ENCODE measurements at regions of chr2 and their contacts with region 1.

Region 1: GRCh38 chr2:169824373-169825333 is at the start of gene METTL5:
- DNase-seq: peak; percentile 86
- ATAC-seq: peak; percentile 50
- H3K4me3 ChIP-seq: peak within 1 kb of the TSS; percentile 78
- H3K27ac ChIP-seq: peak within 1 kb of the TSS; percentile 54
- H3K4me1 ChIP-seq: peaks cover 43% of the 10 kb centered on the region
- H3K27me3 ChIP-seq: no peaks in the 10 kb centered on the region
- CTCF ChIP-seq: peak; percentile 98
- total RNA-seq, gene METTL5: 61.1 and 62.0 TPM in 2 replicates

Region 2: DNA sequence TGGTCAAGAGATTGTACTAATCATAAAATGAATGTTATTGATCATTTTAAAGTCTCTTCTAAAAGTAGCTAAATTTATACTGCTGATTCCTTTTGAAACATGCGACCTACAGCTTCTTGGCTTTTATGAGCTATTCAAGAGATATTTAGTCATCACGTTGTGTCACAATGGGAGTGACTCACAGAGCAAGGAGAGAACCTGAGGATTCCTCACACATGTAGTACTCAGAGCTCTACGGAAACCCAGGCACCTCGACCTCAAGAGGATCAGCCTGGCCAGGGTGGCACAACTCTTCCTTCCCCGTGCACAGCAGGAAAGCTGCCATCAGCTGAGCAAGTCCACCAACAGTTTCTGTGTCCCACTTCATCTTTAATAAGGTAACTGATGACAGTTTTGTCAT is 755.3 kb before region 1 on chr2 and contains the start of gene DHRS9:
- CTCF ChIA-PET with region 1: no interaction called
- POLR2A ChIA-PET with region 1: no interaction called
- intact Hi-C with region 1: no loop called
- DNase-seq: peak; percentile 97
- ATAC-seq: peak; percentile 97
- H3K4me3 ChIP-seq: no peak within 1 kb of the TSS
- H3K27ac ChIP-seq: peak within 1 kb of the TSS; percentile 65
- H3K4me1 ChIP-seq: peaks cover 44% of the 10 kb centered on the region
- H3K27me3 ChIP-seq: no peaks in the 10 kb centered on the region
- CTCF ChIP-seq: no peak
- total RNA-seq, gene DHRS9: 0.22 TPM in 1 of 2 replicates, not detected in the other

Region 3: DNA sequence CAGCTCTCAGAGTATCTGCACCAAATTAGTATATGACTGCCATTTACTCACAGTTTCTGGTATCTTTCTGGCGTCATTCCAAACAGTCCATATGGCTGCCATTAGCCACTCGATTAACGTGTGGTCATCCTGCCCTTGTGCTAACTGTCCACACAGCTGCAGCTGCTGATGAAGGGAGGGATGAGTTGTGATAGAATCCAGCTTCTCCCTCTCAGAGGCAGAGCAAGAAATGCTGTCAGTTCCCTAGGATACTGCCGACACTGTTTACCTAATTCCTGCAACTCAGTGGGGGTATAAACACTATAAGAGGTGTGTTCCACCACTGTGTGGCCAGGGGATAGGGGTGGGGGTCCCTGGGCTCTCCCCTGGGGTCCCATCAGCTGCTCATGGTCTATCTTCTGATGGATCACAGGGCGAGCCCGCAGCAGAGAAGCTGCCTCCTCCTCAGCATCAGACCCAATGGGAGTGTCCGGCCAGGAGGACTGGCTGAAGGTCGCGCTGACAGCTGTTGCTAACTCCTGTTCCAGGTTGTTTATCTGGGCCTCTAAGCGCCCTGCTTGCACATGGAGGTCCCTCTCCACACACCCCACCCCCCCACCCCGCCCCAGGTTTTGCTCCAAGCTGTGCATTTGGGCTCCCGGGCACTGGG is 108.3 kb before region 1 on chr2:
- CTCF ChIA-PET with region 1: no interaction called
- POLR2A ChIA-PET with region 1: no interaction called
- intact Hi-C with region 1: no loop called
- DNase-seq: no peak
- ATAC-seq: peak; percentile 28
- H3K4me3 ChIP-seq: no peak overlapping the region; the same call in 1 of the 2 replicates
- H3K27ac ChIP-seq: no peak overlapping the region
- H3K4me1 ChIP-seq: peaks cover 26% of the 10 kb centered on the region
- H3K27me3 ChIP-seq: no peaks in the 10 kb centered on the region
- CTCF ChIP-seq: no peak

Region 4: DNA sequence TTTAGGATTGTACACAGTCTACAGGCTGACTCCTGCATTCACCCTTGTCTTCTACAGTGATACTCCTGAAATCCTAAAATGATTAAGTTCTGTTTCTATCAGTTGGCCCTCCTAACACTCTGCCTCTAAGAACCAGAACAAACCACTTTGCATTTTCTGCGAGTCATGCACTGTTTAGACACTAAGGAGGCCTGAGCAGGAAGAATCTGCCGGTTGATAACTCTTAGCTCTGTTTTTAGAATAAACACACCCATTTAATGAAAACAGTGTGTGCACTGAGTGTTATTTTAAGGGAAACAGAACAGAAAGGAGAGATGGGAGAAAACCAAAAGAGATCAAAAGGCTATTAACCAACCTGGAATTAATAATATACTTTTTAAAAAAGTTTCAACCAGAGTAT is 48.9 kb before region 1 on chr2:
- CTCF ChIA-PET with region 1: no interaction called
- POLR2A ChIA-PET with region 1: interaction called, 10 read pairs
- intact Hi-C with region 1: no loop called
- DNase-seq: peak; percentile 15
- ATAC-seq: no peak
- H3K4me3 ChIP-seq: no peak overlapping the region
- H3K27ac ChIP-seq: no peak overlapping the region
- H3K4me1 ChIP-seq: no peaks in the 10 kb centered on the region
- H3K27me3 ChIP-seq: no peaks in the 10 kb centered on the region
- CTCF ChIP-seq: no peak

Region 5: GRCh38 chr2:169877398-169877797 is 52.7 kb after region 1 on chr2:
- CTCF ChIA-PET with region 1: interaction called, 8 read pairs
- POLR2A ChIA-PET with region 1: no interaction called
- intact Hi-C with region 1: loop called (anchors 1 kb)
- DNase-seq: peak; percentile 33
- ATAC-seq: peak; percentile 45; the same call in 1 of the 2 replicates
- H3K4me3 ChIP-seq: no peak overlapping the region
- H3K27ac ChIP-seq: no peak overlapping the region
- H3K4me1 ChIP-seq: no peaks in the 10 kb centered on the region
- H3K27me3 ChIP-seq: no peaks in the 10 kb centered on the region
- CTCF ChIP-seq: peak; percentile 50

Region 6: DNA sequence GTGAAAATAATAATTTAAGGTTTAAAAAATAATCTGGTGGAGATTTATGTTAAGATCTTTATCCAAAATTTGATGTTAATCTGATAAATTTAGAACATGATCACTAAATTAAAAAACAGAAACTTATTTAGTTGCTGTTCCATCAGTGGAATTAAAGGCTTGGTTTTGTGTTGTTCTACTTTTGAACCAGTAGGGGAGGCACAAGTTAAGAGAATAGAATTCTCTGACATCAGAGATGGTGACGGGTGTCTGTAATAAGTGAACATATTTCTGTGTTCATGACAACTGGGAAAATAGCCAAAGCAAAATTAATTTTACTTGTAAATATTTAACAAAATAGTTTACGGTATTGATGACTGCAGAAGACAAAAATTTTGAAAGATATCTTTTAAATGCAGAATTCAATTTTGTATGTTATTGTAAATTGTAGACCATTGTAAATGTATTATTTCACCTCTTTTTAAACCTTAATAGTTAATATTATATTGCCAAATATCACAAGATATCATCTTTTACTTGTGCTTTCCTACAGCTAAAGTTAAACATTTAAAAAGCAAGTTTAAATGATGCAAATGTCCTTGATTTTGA is 108.6 kb after region 1 on chr2:
- CTCF ChIA-PET with region 1: interaction called, 3 read pairs
- POLR2A ChIA-PET with region 1: no interaction called
- intact Hi-C with region 1: loop called (anchors 2 kb)
- DNase-seq: peak; percentile 70
- ATAC-seq: peak; percentile 37; the same call in 1 of the 2 replicates
- H3K4me3 ChIP-seq: no peak overlapping the region
- H3K27ac ChIP-seq: no peak overlapping the region
- H3K4me1 ChIP-seq: no peaks in the 10 kb centered on the region
- H3K27me3 ChIP-seq: no peaks in the 10 kb centered on the region
- CTCF ChIP-seq: peak; percentile 77